H1 (cell line): ENCODE measurements at regions of chr6 and their contacts with region 1.

Region 1: DNA sequence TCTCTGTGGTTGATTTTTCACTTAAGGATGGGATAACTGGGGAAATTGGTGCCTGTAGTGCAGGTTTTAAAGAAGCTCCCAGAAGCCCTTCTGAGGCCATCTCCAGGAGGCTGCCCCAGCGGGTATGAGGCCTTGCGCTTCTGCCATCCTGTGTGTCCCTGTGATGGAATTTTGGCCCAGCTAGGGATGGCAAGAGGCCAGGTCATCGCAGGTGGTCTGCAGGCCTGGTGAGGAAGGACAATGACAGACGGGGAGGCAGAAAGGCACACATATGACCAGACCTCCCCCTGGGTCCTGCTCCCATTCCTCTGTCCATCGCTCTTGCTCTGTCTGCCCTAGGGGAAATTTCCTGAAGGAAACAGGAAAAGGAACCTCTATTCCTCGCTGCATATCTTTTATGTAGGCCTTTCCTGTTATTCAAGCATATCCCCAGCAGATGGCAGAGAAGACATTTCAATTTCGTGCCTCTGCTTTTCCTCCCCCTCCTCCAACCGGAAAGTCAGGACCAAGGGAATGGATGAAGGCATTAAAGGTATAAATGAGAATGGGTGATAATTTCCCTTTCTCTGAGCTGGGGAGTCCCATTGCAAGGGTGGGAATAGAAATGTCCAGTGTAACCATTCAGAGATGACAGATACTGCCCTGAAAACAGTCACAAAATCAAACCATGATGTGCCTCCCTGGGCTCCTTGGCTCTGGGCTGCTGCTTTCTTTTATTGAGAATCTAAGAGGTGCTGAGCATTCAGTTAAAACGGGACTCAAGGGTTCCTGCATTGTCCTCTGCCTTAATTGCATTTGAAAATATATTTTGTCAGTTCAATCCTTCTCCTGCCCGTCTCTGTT is 17.6 kb upstream of the HLA-F start:
- DNase-seq: peak in 1 of 2 experiments; percentile 52
- H3K4me3 ChIP-seq: no peak overlapping the region
- H3K27ac ChIP-seq: no peak overlapping the region
- H3K4me1 ChIP-seq: no peaks in the 10 kb centered on the region; a peak in 1 of 7 replicates
- H3K27me3 ChIP-seq: no peaks in the 10 kb centered on the region
- CTCF ChIP-seq: peak in 2 of 3 experiments; percentile 65 to 72; a peak in 3 of 4 replicates
- EP300 ChIP-seq: no peak
- POLR2A ChIP-seq: no peak
- RAD21 ChIP-seq: peak; percentile 87 to 89

Region 2: GRCh38 chr6:27902335-27903314 is 1803.0 kb before region 1 on chr6:
- CTCF ChIA-PET with region 1: no interaction called
- POLR2A ChIA-PET with region 1: no interaction called
- DNase-seq: peak in 1 of 2 experiments; percentile 94
- H3K4me3 ChIP-seq: peak overlapping the region; percentile 79 to 98 (median 82)
- H3K27ac ChIP-seq: peak overlapping the region; percentile 57; the same call in 1 of the 2 replicates
- H3K4me1 ChIP-seq: no peaks in the 10 kb centered on the region
- H3K27me3 ChIP-seq: no peaks in the 10 kb centered on the region
- CTCF ChIP-seq: no peak
- EP300 ChIP-seq: no peak
- POLR2A ChIP-seq: peak in 1 of 2 experiments; percentile 46; a peak in 1 of 3 replicates
- RAD21 ChIP-seq: no peak

Region 3: GRCh38 chr6:29426655-29427054 is 279.0 kb before region 1 on chr6:
- CTCF ChIA-PET with region 1: no interaction called
- POLR2A ChIA-PET with region 1: no interaction called
- DNase-seq: no peak
- H3K4me3 ChIP-seq: no peak overlapping the region
- H3K27ac ChIP-seq: no peak overlapping the region
- H3K4me1 ChIP-seq: no peaks in the 10 kb centered on the region
- H3K27me3 ChIP-seq: no peaks in the 10 kb centered on the region
- CTCF ChIP-seq: no peak
- EP300 ChIP-seq: no peak
- POLR2A ChIP-seq: no peak
- RAD21 ChIP-seq: 0 out of 4 replicates have a peak, but pooled peaks of 1 of the 2 experiments have one; percentile 8

Region 4: DNA sequence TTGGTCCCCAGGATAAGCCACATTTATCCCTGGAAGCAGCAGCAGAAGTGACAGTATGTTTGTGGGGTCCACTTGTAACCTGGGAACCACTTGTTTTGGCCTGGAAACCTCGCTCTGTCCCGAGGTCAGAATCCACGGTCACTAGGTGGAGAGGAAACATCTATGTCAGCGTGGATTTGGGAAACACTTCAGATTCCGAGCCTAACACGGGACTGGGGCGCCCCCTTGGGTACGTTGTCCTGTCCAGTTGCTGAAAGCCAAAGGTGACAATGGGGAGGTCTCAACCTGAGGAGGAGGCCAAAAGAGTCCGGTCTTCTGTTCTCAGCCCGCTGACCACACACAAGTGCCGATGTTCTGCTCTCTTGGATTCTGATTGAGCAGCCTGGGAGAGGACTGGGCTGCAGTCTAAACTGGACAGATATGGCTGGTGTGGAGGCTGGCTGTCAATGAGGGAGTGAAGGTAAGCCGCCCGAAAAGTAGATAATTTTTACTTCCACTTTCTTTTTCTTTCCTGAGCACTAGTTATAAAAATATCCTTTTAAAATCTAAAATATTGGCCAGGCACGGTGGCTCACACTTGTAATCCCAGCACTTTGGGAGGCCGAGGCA is 19.8 kb before region 1 on chr6:
- CTCF ChIA-PET with region 1: interaction called, 14 read pairs
- POLR2A ChIA-PET with region 1: no interaction called
- DNase-seq: peak in 1 of 2 experiments; percentile 88
- H3K4me3 ChIP-seq: no peak overlapping the region
- H3K27ac ChIP-seq: no peak overlapping the region
- H3K4me1 ChIP-seq: peaks cover 0 to 8% (median 0%) of the 10 kb centered on the region in 4 experiments; a peak in 4 of 7 replicates
- H3K27me3 ChIP-seq: no peaks in the 10 kb centered on the region
- CTCF ChIP-seq: peak; percentile 80 to 89 (median 85)
- EP300 ChIP-seq: no peak
- POLR2A ChIP-seq: no peak
- RAD21 ChIP-seq: peak; percentile 93 to 97

Region 5: GRCh38 chr6:29720863-29721262 is 15.3 kb after region 1 on chr6:
- CTCF ChIA-PET with region 1: interaction called, 15 read pairs
- POLR2A ChIA-PET with region 1: no interaction called
- DNase-seq: no peak
- H3K4me3 ChIP-seq: no peak overlapping the region
- H3K27ac ChIP-seq: no peak overlapping the region
- H3K4me1 ChIP-seq: peaks cover 0 to 6% (median under 1%) of the 10 kb centered on the region in 4 experiments; a peak in 3 of 7 replicates
- H3K27me3 ChIP-seq: peaks cover 10 to 34% (median 30%) of the 10 kb centered on the region in 4 experiments
- CTCF ChIP-seq: peak; percentile 42 to 54 (median 50)
- EP300 ChIP-seq: no peak
- POLR2A ChIP-seq: no peak
- RAD21 ChIP-seq: peak; percentile 39 to 54; a peak in 3 of 4 replicates

Region 6: DNA sequence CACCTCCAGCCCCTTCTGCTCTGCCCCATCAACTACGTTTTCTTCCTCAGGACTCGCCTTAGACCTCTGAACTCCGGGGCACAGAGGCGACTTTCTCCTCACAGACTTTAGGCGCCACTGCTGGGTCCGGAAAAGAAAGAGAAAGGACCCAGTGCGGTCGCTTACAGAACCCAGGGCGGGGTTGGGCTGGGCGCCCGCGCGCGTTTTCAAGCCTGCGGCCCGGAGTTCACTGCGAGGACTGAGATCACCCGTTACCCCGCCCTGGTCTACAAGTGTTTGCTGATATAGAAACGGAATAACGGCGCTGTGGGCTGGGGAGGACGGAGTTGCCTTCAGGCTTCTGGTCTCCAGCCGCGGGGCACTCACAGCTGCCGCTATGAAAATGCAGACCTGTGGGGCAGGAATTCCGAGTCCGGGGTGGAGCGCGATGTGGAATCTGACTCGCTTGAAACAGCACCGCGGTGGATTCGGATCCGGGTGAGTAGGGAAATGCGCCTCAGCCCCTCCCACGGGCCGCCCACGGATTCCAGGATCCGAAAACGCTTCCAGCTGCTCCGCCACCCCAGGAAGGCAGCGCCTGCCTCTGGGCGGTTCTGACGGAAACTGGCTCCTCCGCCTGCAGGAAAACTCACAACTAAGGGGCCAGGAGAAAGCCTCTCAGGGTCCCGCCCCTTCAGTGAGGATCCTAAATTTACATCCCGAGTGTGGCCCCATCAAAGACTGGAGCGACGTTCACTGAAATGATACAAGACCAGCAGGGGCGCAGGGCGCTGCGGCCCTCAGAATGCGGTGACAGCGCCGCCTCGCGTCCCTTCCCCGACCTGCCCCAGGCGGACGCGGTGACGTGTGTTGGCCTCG is 47.1 kb after region 1 on chr6:
- CTCF ChIA-PET with region 1: interaction called, 21 read pairs
- POLR2A ChIA-PET with region 1: no interaction called
- DNase-seq: peak; percentile 82 to 91
- H3K4me3 ChIP-seq: peak overlapping the region; percentile 37 to 78 (median 69)
- H3K27ac ChIP-seq: no peak overlapping the region
- H3K4me1 ChIP-seq: peaks cover 6 to 19% (median 10%) of the 10 kb centered on the region in 4 experiments; a peak in 6 of 7 replicates
- H3K27me3 ChIP-seq: peaks cover 8 to 48% (median 38%) of the 10 kb centered on the region in 4 experiments
- CTCF ChIP-seq: peak; percentile 97 to 100 (median 99)
- EP300 ChIP-seq: peak in 1 of 2 experiments; percentile 60; a peak in 1 of 3 replicates
- POLR2A ChIP-seq: peak in 1 of 2 experiments; percentile 80; a peak in 2 of 3 replicates
- RAD21 ChIP-seq: peak; percentile 71 to 82